Stomach (tissue), 19 donors: ENCODE measurements at regions of chr13 and their contacts with region 1.

Region 1: GRCh38 chr13:70960841-70961443 is 852.7 kb upstream of the KLHL1 start:
- DNase-seq: peak in 1 of 2 donors; percentile 77
- H3K4me3 ChIP-seq: no peak overlapping the region
- H3K27ac ChIP-seq: no peak overlapping the region
- H3K4me1 ChIP-seq: no peaks in the 10 kb centered on the region
- H3K27me3 ChIP-seq: no peaks in the 10 kb centered on the region
- CTCF ChIP-seq: peak in 3 of 7 experiments; percentile 13 to 20 (median 16)
- EP300 ChIP-seq: no peak
- POLR2A ChIP-seq: no peak

Region 2: GRCh38 chr13:72029981-72030380 is 1069.0 kb after region 1 on chr13:
- intact Hi-C with region 1: loop called (anchors 10 kb)
- DNase-seq: no peak
- H3K4me3 ChIP-seq: no peak overlapping the region
- H3K27ac ChIP-seq: no peak overlapping the region
- H3K4me1 ChIP-seq: no peaks in the 10 kb centered on the region
- H3K27me3 ChIP-seq: no peaks in the 10 kb centered on the region
- CTCF ChIP-seq: no peak
- EP300 ChIP-seq: no peak
- POLR2A ChIP-seq: no peak